T-cell (primary cell): ENCODE measurements at regions of chrX and their contacts with region 1.

Region 1: GRCh38 chrX:134174859-134175258 is 62.1 kb upstream of the CCDC160 start:
- DNase-seq: no peak
- ATAC-seq: no peak
- H3K4me3 ChIP-seq: no peak overlapping the region
- H3K4me3 Mint-ChIP-seq: peak overlapping the region in 1 of 3 donors; percentile 26
- H3K27ac ChIP-seq: no peak overlapping the region
- H3K27ac Mint-ChIP-seq: no peak overlapping the region
- H3K4me1 ChIP-seq: peaks cover 2 to 9% of the 10 kb centered on the region in 2 experiments
- H3K4me1 Mint-ChIP-seq: peaks cover 13 to 17% (median 14%) of the 10 kb centered on the region in 3 donors
- H3K27me3 ChIP-seq: peaks cover 0 to 7% of the 10 kb centered on the region in 2 experiments
- H3K27me3 Mint-ChIP-seq: peaks cover 13 to 35% of the 10 kb centered on the region in 2 donors

Region 2: DNA sequence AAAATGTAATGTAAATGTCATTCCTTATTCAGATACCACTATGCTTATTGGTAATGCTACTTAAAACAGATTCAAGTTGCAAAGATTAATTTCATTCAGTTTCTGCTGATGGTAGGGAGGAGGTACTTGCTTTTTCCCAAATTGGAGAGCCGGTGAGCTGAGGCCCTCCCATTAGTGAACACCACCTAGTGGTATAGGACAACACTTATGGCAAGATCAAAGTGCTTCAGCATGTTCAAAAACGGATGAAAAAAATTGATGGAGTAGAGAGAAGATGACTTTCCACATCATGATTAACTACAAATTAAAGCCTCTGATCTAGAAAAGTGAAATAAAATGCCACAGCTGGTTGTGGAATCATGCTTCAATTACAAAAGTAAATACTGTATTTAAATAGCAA is 1798.9 kb before region 1 on chrX:
- CTCF ChIA-PET with region 1: no interaction called
- POLR2A ChIA-PET with region 1: interaction called in 1 of 2 experiments, 14 read pairs
- DNase-seq: no peak
- ATAC-seq: no peak
- H3K4me3 ChIP-seq: no peak overlapping the region
- H3K4me3 Mint-ChIP-seq: no peak overlapping the region
- H3K27ac ChIP-seq: no peak overlapping the region
- H3K27ac Mint-ChIP-seq: no peak overlapping the region
- H3K4me1 ChIP-seq: no peaks in the 10 kb centered on the region
- H3K4me1 Mint-ChIP-seq: no peaks in the 10 kb centered on the region
- H3K27me3 ChIP-seq: no peaks in the 10 kb centered on the region
- H3K27me3 Mint-ChIP-seq: peaks cover 0 to 7% of the 10 kb centered on the region in 2 donors